ENCODE measurements at regions of chr2 and their contacts with region 1.

Region 1: GRCh38 chr2:222756951-222757650 is 85.6 kb downstream of the MOGAT1 start:
- DNase-seq: no peak
- H3K4me3 ChIP-seq: no peak overlapping the region
- H3K27ac ChIP-seq: no peak overlapping the region
- H3K4me1 ChIP-seq: no peaks in the 10 kb centered on the region
- H3K27me3 ChIP-seq: no peaks in the 10 kb centered on the region
- CTCF ChIP-seq: no peak
- POLR2A ChIP-seq: no peak

Region 2: DNA sequence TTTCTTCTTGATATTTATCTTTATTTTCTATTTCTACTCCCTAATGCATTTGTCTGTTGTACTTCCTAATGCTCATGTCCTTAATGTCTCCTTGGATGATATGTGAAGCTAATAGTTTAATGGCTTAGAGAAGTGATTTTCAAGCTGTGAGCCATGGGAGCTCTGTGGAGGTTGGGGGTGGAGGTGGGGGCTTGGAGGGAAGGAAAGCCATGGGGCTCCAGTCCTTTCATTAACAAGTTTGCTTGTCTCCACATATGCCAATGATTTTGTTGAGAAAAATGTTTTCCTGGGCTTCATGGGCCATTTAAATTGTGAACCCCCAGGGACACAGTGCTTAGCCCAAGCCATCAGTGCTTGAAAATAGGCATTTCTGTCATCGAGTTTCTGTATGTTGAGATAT is 580.9 kb after region 1 on chr2:
- intact Hi-C with region 1: loop called (anchors 5 kb)
- DNase-seq: no peak
- H3K4me3 ChIP-seq: no peak overlapping the region
- H3K27ac ChIP-seq: no peak overlapping the region
- H3K4me1 ChIP-seq: no peaks in the 10 kb centered on the region
- H3K27me3 ChIP-seq: no peaks in the 10 kb centered on the region
- CTCF ChIP-seq: no peak
- POLR2A ChIP-seq: no peak